ENCODE measurements at regions of chr5 and their contacts with region 1.

Region 1: GRCh38 chr5:88680253-88681132 is 202.5 kb downstream of the MEF2C start:
- DNase-seq: peak; percentile 91

Region 2: DNA sequence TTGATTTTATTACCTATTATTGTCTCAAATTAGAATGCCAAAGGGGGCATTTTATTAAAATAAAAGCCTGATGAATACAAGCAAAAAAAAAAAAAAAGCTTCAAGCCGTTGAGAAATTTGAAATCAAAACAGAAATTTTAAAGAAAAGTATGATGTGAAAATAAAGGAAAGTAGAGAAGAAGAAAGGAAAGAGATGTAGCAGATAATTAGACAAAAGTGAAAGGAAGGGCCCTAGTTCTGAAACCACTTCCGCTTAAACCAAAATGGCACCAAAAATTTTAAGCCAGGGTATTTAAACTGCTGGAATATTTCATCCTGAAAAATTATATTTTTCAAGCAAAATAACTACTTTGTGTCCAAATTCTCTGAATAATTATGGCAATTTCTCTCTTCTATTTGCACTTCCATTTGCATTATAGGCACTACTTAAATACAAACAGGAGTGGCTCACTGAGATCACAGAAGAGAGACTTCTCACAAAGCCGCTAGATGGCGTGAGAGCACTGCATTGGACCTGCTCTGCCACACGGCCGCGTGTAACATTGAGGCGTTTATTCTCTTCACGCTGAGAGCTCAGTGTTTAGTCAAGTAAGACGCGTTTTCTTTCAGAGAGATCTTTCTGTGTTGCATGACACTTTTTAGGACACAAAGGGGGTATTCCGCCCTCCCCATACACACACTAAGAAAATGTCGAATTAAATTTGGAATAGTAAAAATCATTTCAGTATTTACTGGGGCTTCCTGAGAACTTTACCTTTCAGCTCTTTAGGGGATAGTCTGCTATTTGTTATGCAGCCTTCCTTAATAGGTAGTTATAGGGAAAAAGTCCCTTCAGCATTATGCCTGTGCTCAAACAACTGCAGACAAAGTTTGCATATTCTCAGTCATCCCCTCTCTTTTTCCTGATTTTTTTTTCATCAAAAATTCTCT is 899.4 kb before region 1 on chr5:
- intact Hi-C with region 1: loop called (anchors 5 to 10 kb)
- DNase-seq: peak; percentile 90

Region 3: DNA sequence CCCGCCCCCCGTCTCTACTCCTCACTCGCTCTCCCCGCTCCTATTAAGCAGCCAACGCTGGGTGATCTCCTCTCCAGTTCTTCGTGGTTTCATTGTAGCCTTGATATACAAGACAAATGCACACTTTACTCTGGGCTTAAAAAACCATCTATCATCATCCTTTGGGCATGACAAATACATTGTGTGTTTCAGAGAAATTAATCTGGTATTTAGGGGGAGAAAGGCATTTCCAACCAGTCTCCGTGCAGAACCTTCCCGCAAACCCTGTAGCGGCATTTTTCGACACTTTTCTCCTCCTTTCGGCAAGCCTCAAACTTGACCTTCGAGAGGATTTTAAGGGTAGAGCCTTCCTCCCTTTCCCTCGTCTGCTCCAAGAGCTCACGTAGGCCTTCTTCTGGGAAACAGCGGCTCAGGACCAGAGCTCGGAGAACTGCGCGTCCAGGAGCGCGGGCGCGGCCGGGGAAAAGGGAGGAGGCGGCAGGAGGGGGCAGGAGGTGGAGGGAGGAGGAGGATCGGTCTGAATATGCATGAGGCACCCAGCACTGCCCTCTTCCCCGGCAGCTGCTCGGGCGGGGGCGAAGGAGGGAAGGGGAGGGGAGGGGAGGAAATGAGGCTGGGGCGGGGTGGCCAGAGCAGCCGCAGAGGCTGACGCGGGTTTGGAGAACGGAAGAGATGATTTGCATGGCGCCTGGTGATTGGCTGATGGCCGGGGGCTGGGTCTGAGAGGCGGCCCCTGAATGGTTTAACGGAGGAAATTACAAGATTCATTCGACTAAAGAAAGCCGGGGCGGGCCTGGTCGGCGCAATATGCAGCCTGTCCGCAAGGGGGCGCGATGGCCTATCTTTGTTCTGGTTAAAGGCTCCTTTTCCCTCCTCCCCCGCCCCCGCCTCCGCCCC is 539.4 kb before region 1 on chr5:
- intact Hi-C with region 1: loop called in 1 of 2 experiments (anchors 10 kb)
- DNase-seq: peak; percentile 98

Region 4: GRCh38 chr5:88746438-88746882 is 66.0 kb after region 1 on chr5:
- intact Hi-C with region 1: no loop called
- DNase-seq: no peak

Measured in posterior vena cava (tissue), 2 donors.